Heart left ventricle (tissue), 16 donors: ENCODE measurements at regions of chr14 and their contacts with region 1.

Region 1: DNA sequence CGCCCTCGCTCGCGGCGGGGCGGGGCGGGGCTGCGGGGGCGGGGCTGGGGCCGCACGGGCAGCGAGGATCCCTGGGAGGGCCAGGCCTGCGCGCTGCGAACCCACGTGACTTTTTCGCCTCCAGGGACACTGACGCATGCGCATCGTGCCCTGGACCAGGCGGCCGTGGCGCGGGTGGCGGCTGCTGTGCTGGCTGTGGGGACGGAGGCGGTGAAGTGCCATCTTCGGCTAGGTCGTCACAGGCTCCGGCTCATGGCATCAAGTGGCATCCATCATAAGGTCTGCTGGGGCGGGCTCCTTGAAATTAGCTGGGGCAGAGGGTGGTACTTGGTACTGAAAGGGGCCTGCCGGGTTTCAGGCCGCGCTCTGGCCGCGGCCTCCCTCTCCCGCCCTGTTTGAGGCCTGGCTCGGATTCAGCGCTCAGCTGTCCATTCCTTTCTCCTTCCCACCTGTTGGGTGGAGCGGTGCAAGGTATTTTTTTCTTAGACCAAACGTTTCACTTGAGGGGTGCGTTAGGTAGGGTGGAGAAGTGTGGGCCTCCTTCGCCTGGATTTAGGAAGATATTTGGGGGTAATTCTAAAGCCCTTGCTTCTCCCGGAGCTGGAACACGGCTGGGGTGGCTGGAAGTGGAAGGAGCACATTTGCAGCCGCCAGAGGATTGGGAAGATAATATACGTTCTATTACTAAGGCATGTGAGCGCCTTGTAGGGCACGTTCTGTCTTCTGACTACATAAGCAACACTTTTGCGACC is at the start of gene PRPF39:
- DNase-seq: peak; percentile 95 to 97 (median 96)
- ATAC-seq: peak; percentile 99 to 100 (median 99)
- H3K4me3 ChIP-seq: peak within 1 kb of the TSS; percentile 59 to 85 (median 76)
- H3K27ac ChIP-seq: peak within 1 kb of the TSS; percentile 35 to 91 (median 80)
- H3K4me1 ChIP-seq: peaks cover 0 to 51% (median 31%) of the 10 kb centered on the region in 12 donors
- H3K27me3 ChIP-seq: no peaks in the 10 kb centered on the region
- CTCF ChIP-seq: no peak
- POLR2A ChIP-seq: peak in 1 of 2 donors; percentile 84
- total RNA-seq, gene PRPF39: 5.9 to 17.0 (median 13.3) TPM

Region 2: DNA sequence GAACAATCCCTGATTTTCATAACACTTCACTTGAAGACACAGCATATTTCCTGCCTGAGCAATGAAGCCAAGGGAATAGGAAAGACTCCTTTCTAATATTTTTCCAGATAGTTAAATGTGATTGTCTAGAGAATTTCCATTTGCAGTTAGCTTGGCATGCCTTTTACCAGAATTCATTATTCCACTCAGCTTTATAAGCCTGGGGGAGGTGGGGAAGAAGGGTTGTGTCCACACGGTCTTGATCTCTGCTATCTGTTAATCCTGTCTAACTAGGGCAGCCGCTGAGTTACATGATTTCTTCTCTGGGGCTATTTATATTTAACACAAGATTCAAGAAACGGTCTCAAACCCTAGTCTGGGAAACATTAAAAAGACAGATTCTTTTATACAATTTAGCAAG is 430.5 kb before region 1 on chr14:
- intact Hi-C with region 1: no loop called
- DNase-seq: no peak
- ATAC-seq: no peak
- H3K4me3 ChIP-seq: no peak overlapping the region
- H3K27ac ChIP-seq: no peak overlapping the region
- H3K4me1 ChIP-seq: no peaks in the 10 kb centered on the region
- H3K27me3 ChIP-seq: no peaks in the 10 kb centered on the region
- CTCF ChIP-seq: no peak
- POLR2A ChIP-seq: no peak

Region 3: GRCh38 chr14:45038865-45039264 is 45.3 kb before region 1 on chr14:
- intact Hi-C with region 1: no loop called
- DNase-seq: no peak
- ATAC-seq: peak in 1 of 4 donors; percentile 20
- H3K4me3 ChIP-seq: no peak overlapping the region
- H3K27ac ChIP-seq: no peak overlapping the region
- H3K4me1 ChIP-seq: no peaks in the 10 kb centered on the region
- H3K27me3 ChIP-seq: no peaks in the 10 kb centered on the region
- CTCF ChIP-seq: no peak
- POLR2A ChIP-seq: no peak

Region 4: DNA sequence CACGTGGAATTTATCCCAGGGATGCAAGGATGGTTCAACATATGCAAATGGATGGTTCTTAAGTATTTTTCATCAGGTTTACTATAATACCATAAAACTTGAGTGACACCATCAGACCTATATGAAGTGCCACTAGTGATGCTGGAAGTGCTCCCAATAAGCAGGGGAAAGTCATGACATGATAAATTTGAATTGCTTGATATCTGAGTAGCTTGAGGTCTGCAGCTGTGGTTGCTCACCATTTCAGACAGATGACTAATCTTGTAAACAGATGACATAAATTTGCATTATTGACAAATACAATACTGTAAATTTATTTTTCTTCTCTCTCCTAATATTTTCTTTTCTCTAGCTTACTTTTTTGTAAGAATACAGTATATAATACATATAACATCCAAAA is 13.9 kb before region 1 on chr14:
- intact Hi-C with region 1: loop called in 1 of 10 experiments (anchors 1 kb)
- DNase-seq: no peak
- ATAC-seq: no peak
- H3K4me3 ChIP-seq: no peak overlapping the region
- H3K27ac ChIP-seq: no peak overlapping the region
- H3K4me1 ChIP-seq: peaks cover 0 to 19% (median 4%) of the 10 kb centered on the region in 12 donors
- H3K27me3 ChIP-seq: no peaks in the 10 kb centered on the region
- CTCF ChIP-seq: no peak
- POLR2A ChIP-seq: no peak